AG04450 (cell line): ENCODE measurements at regions of chr1 and their contacts with region 1.

Region 1: GRCh38 chr1:245578771-245579170 is 424.0 kb downstream of the KIF26B start:
- DNase-seq: no peak
- H3K4me3 ChIP-seq: no peak overlapping the region
- H3K27ac ChIP-seq: no peak overlapping the region
- H3K27me3 ChIP-seq: peaks cover 2% of the 10 kb centered on the region
- CTCF ChIP-seq: no peak

Region 2: GRCh38 chr1:245645894-245646293 is 67.1 kb after region 1 on chr1:
- CTCF ChIA-PET with region 1: no interaction called
- POLR2A ChIA-PET with region 1: interaction called, 10 read pairs
- DNase-seq: no peak
- H3K4me3 ChIP-seq: no peak overlapping the region
- H3K27ac ChIP-seq: no peak overlapping the region
- H3K27me3 ChIP-seq: no peaks in the 10 kb centered on the region
- CTCF ChIP-seq: no peak